MCF 10A (cell line): ENCODE measurements at regions of chr1 and their contacts with region 1.

Region 1: GRCh38 chr1:201254625-201255506 is 28.4 kb upstream of the PKP1 start:
- DNase-seq: peak; percentile 80
- H3K4me3 Mint-ChIP-seq: no peak overlapping the region
- H3K27ac Mint-ChIP-seq: no peak overlapping the region
- H3K4me1 Mint-ChIP-seq: no peaks in the 10 kb centered on the region
- H3K27me3 Mint-ChIP-seq: no peaks in the 10 kb centered on the region
- CTCF ChIP-seq: peak; percentile 100

Region 2: GRCh38 chr1:201275041-201275676 is 20.3 kb after region 1 on chr1:
- CTCF ChIA-PET with region 1: interaction called, 56 read pairs
- POLR2A ChIA-PET with region 1: interaction called, 3,819 read pairs
- intact Hi-C with region 1: loop called (anchors 2 kb)
- DNase-seq: peak; percentile 100
- H3K4me3 Mint-ChIP-seq: no peak overlapping the region
- H3K27ac Mint-ChIP-seq: peak overlapping the region; percentile 79
- H3K4me1 Mint-ChIP-seq: peaks cover 52% of the 10 kb centered on the region
- H3K27me3 Mint-ChIP-seq: no peaks in the 10 kb centered on the region
- CTCF ChIP-seq: no peak

Region 3: DNA sequence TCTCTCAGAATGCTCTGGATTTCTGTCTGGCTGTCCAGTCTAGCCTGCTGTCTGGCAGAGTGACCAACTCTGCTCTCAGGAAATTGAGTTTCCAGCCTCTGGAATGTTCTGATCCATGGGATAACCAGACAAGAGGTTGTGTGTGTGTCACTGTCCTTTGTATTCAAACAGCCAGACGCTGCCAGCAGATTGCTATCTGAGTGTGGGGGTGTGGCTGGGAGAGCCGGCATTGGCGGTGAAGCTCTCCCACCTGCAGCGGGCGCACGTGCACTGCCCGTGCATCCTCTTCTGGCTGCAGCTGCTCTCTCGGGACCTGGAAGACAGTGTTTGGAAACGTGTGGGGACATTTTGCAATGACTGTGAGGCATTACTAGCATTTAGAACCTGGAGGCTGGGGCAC is 54.6 kb after region 1 on chr1:
- CTCF ChIA-PET with region 1: interaction called, 474 read pairs
- POLR2A ChIA-PET with region 1: interaction called, 3,819 read pairs
- intact Hi-C with region 1: loop called (anchors 1 kb)
- DNase-seq: peak; percentile 98
- H3K4me3 Mint-ChIP-seq: peak overlapping the region; percentile 1
- H3K27ac Mint-ChIP-seq: peak overlapping the region; percentile 97
- H3K4me1 Mint-ChIP-seq: peaks cover 71% of the 10 kb centered on the region
- H3K27me3 Mint-ChIP-seq: no peaks in the 10 kb centered on the region
- CTCF ChIP-seq: peak; percentile 38

Region 4: DNA sequence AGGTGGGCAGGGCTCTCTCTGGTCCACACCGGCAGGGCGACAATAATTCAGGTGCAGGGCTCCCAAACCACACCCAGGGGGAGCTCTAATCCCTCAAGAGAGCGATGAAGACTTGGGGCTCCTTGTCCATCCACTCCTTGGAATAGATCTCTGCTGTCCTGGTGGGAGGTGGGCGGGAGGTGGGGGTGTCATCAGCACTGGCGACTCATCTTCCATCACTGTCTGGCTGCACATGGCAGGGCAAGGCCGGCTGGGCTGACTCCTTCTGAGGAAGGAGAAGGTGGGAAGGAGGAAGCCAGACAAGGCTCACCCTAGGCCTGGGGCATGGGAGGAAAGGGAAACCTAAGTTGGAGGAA is 93.3 kb after region 1 on chr1:
- CTCF ChIA-PET with region 1: interaction called, 550 read pairs
- POLR2A ChIA-PET with region 1: interaction called, 68 read pairs
- intact Hi-C with region 1: loop called (anchors 1 kb)
- DNase-seq: peak; percentile 92
- H3K4me3 Mint-ChIP-seq: no peak overlapping the region
- H3K27ac Mint-ChIP-seq: no peak overlapping the region
- H3K4me1 Mint-ChIP-seq: peaks cover 24% of the 10 kb centered on the region
- H3K27me3 Mint-ChIP-seq: peaks cover 10% of the 10 kb centered on the region
- CTCF ChIP-seq: peak; percentile 92

Region 5: GRCh38 chr1:201385299-201385891 is 130.5 kb after region 1 on chr1:
- CTCF ChIA-PET with region 1: interaction called, 21 read pairs
- POLR2A ChIA-PET with region 1: interaction called, 3 read pairs
- intact Hi-C with region 1: no loop called
- DNase-seq: peak; percentile 80
- H3K4me3 Mint-ChIP-seq: no peak overlapping the region
- H3K27ac Mint-ChIP-seq: no peak overlapping the region
- H3K4me1 Mint-ChIP-seq: peaks cover 19% of the 10 kb centered on the region
- H3K27me3 Mint-ChIP-seq: no peaks in the 10 kb centered on the region
- CTCF ChIP-seq: peak; percentile 99

Region 6: DNA sequence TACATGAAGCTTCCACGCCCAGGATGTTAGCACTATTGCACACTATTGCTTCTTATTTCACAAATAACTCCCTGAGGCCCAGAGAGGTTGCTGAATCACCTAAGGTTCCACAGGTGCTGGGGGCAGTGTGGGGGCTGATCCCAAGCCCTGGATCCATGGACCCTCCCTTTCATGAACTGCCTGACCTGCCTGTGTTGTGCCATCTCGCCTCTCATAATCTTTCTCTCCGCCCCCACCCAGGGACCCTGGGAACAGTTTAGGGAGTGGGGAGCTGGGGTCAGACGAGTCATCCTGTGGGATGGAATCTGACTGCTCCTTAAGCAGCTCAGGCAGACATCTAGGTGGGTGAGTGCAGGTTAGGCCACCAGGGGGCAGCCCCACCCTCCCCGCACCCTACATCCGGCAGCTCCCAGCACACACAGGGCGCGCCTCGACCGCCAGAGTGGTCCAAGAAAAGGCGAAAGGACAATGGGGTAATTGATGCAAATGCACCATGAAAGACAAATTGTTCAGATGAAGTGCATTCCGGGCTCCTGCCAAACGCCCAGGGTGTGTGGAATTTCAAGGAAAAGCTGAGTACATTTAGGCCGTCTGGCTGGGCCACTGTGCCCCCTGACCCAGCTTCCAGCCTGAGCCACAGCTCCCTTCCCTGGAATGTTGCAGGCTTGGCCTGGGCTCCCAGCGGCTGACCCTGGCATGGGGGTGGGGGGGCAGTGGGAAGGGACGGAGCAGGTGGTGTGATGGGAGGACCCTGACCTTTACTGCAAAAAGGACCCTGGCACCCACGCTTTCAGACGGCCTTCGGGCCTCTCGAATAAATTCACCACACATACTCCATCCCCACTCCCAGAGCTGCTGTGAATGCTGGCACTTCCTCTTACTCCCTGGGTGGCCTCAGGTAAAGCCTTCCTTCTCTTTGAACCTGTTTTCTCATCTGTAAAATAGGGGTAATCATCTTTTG is 193.3 kb after region 1 on chr1:
- CTCF ChIA-PET with region 1: interaction called, 10 read pairs
- POLR2A ChIA-PET with region 1: no interaction called
- intact Hi-C with region 1: no loop called
- DNase-seq: peak; percentile 89
- H3K4me3 Mint-ChIP-seq: no peak overlapping the region
- H3K27ac Mint-ChIP-seq: peak overlapping the region; percentile 36
- H3K4me1 Mint-ChIP-seq: peaks cover 8% of the 10 kb centered on the region
- H3K27me3 Mint-ChIP-seq: no peaks in the 10 kb centered on the region
- CTCF ChIP-seq: peak; percentile 98